CD4-positive, alpha-beta T cell (primary cell): ENCODE measurements at regions of chr13 and their contacts with region 1.

Region 1: DNA sequence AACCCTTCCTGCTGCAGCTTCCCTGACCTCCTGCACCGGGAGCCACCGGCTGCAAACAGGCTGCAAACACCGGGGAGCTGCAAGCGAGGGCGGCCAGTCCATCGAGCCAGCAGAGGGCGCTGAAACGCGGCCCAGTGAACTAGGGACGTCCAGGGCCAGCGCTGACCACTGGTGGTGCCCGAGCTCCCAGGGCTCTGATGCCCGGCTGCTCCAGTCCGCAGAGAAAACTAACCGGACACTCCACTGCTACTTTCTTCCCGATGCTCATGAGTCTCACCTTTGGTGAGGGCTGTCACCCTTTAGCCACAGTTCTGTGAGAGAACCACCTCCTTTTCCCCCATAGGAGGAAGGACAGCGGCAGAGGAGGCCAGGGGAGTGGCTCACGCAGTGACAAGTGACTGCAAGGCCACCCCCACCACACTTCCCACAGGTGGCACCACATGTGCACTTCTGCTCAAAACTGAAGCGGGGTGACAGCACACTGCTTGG is 82.8 kb upstream of the MTIF3 start:
- DNase-seq: peak in 13 of 14 experiments; percentile 18 to 68 (median 32)
- ATAC-seq: peak; percentile 39
- H3K4me3 ChIP-seq: peak overlapping the region; percentile 24
- H3K4me3 Mint-ChIP-seq: no peak overlapping the region
- H3K27ac ChIP-seq: no peak overlapping the region
- H3K27ac Mint-ChIP-seq: no peak overlapping the region
- H3K4me1 ChIP-seq: peaks cover 8% of the 10 kb centered on the region
- H3K4me1 Mint-ChIP-seq: peaks cover 10% of the 10 kb centered on the region
- H3K27me3 ChIP-seq: no peaks in the 10 kb centered on the region
- H3K27me3 Mint-ChIP-seq: peaks cover 6% of the 10 kb centered on the region
- CTCF ChIP-seq: peak; percentile 68

Region 2: GRCh38 chr13:27712421-27712820 is 179.2 kb after region 1 on chr13:
- CTCF ChIA-PET with region 1: interaction called, 3 read pairs
- POLR2A ChIA-PET with region 1: no interaction called
- intact Hi-C with region 1: loop called (anchors 2 to 5 kb)
- DNase-seq: peak in 10 of 14 experiments; percentile 8 to 54 (median 26)
- ATAC-seq: no peak
- H3K4me3 ChIP-seq: no peak overlapping the region
- H3K4me3 Mint-ChIP-seq: no peak overlapping the region
- H3K27ac ChIP-seq: no peak overlapping the region
- H3K27ac Mint-ChIP-seq: no peak overlapping the region
- H3K4me1 ChIP-seq: no peaks in the 10 kb centered on the region
- H3K4me1 Mint-ChIP-seq: no peaks in the 10 kb centered on the region
- H3K27me3 ChIP-seq: peaks cover 0 to 5% of the 10 kb centered on the region in 2 experiments
- H3K27me3 Mint-ChIP-seq: peaks cover 21% of the 10 kb centered on the region
- CTCF ChIP-seq: peak; percentile 61

Region 3: GRCh38 chr13:28077231-28077630 is 544.0 kb after region 1 on chr13:
- CTCF ChIA-PET with region 1: no interaction called
- POLR2A ChIA-PET with region 1: no interaction called
- intact Hi-C with region 1: no loop called
- DNase-seq: no peak
- ATAC-seq: no peak
- H3K4me3 ChIP-seq: no peak overlapping the region
- H3K4me3 Mint-ChIP-seq: no peak overlapping the region
- H3K27ac ChIP-seq: no peak overlapping the region
- H3K27ac Mint-ChIP-seq: no peak overlapping the region
- H3K4me1 ChIP-seq: no peaks in the 10 kb centered on the region
- H3K4me1 Mint-ChIP-seq: no peaks in the 10 kb centered on the region
- H3K27me3 ChIP-seq: no peaks in the 10 kb centered on the region
- H3K27me3 Mint-ChIP-seq: no peaks in the 10 kb centered on the region
- CTCF ChIP-seq: no peak